ENCODE measurements at regions of chr12 and their contacts with region 1.

Region 1: DNA sequence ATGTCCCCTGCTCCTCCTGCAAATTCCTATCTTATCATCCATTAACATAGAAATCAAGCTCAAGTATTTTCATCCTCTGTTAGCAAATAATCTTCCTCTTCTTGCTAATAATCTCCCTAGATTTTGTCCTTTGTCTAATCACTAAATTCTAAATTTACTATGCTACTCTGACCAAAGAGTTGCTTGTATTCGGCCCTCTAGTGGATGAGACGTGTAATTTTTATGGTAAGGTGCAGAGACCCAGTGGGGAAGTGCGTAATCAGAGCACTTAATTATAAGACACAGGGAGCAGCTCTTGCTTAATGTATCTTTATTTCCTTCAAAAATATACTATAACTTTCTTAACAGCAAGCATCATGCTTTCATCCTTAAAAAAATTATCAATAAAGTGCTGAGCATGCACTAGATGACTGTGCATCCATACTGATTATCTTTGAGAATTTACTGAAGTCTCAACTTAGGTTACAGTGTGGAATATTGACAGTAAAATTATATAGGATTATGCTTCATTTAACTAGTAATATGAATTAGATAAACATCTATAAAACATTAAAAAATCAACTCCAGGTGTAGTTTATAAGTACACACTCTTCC is 212.6 kb downstream of the SLC16A7 start:
- DNase-seq: no peak
- H3K4me3 ChIP-seq: no peak overlapping the region
- H3K27ac ChIP-seq: no peak overlapping the region
- H3K4me1 ChIP-seq: no peaks in the 10 kb centered on the region
- H3K27me3 ChIP-seq: no peaks in the 10 kb centered on the region
- CTCF ChIP-seq: peak in 3 of 4 experiments; percentile 44 to 64 (median 56)
- POLR2A ChIP-seq: no peak

Region 2: GRCh38 chr12:59403259-59403932 is 405.0 kb before region 1 on chr12:
- intact Hi-C with region 1: loop called (anchors 10 kb)
- DNase-seq: peak; percentile 19
- H3K4me3 ChIP-seq: no peak overlapping the region
- H3K27ac ChIP-seq: no peak overlapping the region
- H3K4me1 ChIP-seq: no peaks in the 10 kb centered on the region
- H3K27me3 ChIP-seq: no peaks in the 10 kb centered on the region
- CTCF ChIP-seq: peak in 3 of 4 experiments; percentile 50 to 58 (median 54)
- POLR2A ChIP-seq: no peak

Region 3: GRCh38 chr12:59595883-59596540 is 212.4 kb before region 1 on chr12 and contains the start of gene SLC16A7:
- intact Hi-C with region 1: loop called (anchors 10 kb)
- DNase-seq: peak; percentile 77
- H3K4me3 ChIP-seq: peak within 1 kb of the TSS; percentile 48 to 57
- H3K27ac ChIP-seq: peak within 1 kb of the TSS; percentile 88 to 90
- H3K4me1 ChIP-seq: no peaks in the 10 kb centered on the region
- H3K27me3 ChIP-seq: no peaks in the 10 kb centered on the region
- CTCF ChIP-seq: no peak
- POLR2A ChIP-seq: no peak
- total RNA-seq, gene SLC16A7: 4.3 to 10.6 TPM

Region 4: DNA sequence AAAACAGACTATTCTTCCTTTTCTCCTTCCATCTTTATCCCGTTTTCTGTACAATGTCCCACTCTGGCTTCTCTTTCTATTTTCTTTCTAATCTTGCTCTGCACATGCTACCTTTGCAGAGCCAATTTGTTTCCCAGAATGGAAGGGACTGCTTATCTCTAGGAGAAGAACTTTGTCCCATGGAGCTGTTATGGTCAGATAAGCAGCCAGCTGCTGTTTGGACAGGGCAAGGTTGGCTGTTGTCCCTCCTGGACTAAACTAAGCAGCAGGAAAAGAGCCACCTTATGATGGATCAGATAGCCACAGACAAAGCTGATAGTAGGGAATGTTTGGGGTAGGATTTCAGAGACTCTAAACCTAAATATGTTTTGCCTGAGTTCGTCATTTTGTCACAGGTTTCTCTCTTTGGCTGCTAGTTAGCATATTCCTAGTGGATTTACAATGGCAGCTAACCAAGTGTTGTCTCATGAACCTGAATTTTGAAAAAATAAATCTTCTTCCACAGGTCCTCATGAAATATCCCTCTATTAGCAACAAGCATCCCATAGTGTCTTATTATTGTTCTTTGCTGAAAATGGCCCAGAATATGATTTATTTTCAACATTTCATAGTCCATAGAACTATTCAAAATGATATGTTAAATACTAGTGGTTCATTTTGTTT is 50.2 kb after region 1 on chr12:
- intact Hi-C with region 1: no loop called
- DNase-seq: no peak
- H3K4me3 ChIP-seq: no peak overlapping the region
- H3K27ac ChIP-seq: no peak overlapping the region
- H3K4me1 ChIP-seq: no peaks in the 10 kb centered on the region
- H3K27me3 ChIP-seq: no peaks in the 10 kb centered on the region
- CTCF ChIP-seq: no peak
- POLR2A ChIP-seq: no peak

Region 5: DNA sequence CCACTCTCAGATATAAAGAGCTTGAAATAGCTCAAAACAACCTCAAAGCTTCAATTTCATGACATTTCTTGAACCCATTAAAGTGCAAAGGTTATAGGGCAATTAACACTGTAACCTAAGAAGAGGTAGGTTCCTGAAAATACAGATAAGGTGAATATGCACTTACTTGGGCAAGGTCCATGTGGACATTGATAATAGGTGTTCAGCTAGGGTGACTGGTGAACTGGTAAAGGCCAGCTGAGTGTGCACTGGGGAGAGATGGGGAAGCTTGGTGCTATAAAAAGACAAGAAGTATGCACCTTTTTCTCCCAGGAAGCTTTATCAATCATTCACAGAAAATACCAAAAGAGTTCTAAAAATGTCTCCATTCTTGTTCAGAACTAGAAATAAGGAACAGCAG is 206.0 kb after region 1 on chr12:
- intact Hi-C with region 1: no loop called
- DNase-seq: no peak
- H3K4me3 ChIP-seq: no peak overlapping the region
- H3K27ac ChIP-seq: no peak overlapping the region
- H3K4me1 ChIP-seq: no peaks in the 10 kb centered on the region
- H3K27me3 ChIP-seq: no peaks in the 10 kb centered on the region
- CTCF ChIP-seq: no peak
- POLR2A ChIP-seq: no peak